ENCODE measurements at regions of chr1 and their contacts with region 1.

Region 1: DNA sequence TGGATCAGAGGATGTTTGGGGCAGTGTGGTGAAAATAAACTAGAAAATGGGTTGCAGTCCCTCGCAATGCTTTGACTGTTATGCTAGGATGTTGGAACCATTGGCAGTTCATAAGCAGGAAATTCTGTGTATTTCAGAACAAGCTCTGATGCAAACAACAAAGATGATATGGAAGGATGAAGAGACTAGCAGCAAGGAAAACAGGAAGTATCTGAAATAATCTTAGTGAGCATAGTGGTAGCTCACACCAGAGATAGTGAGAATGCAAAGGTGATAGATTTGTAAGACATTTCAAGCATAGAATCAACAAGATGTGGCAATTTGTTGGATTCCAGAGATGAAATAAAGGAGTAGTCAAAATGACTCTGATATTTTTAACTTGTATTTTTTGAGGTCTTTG is 11.1 kb upstream of the RCC1 start:
- DNase-seq: no peak
- H3K4me3 Mint-ChIP-seq: no peak overlapping the region
- H3K27ac Mint-ChIP-seq: no peak overlapping the region
- H3K4me1 Mint-ChIP-seq: peaks cover 5% of the 10 kb centered on the region
- H3K27me3 Mint-ChIP-seq: no peaks in the 10 kb centered on the region

Region 2: DNA sequence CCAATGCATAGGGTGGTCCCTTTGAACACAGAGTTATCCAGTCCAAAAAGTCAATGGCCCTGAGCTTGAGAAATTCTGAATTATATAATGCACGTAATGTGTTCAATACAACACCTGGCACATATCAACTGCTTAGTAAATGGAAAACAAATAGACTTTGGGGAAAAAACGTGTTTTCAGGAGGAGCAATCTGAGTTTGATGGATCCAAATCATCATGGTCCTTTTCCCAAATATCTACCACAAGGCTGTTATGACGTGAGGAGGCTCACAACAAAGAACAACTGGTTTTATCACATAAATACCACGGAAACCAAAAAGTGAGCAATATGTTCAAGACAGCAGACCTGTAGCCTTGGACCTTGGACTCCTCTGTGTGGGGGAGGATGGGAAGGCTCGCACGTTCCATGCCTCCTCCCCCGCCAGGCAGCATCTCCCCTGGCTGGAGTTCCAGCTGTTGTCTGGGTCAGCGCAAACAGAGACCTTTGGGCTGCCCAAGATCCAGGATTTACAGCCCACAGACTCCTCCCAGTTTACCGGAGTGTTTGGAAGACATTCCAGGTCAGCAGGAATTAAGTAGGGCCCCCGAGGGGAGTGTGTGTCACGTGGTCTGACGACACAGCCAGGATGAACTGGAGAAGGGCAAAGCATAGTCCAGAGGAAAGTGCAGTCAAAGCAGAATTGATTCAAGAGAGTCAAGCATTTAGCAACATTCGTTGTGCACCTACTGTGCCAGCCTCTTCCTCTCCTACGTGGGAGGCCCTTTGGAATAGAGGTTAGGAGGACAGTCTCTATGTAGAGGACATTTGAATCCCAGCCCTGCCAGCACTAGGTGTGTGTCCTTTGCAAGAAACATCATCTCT is 198.1 kb before region 1 on chr1:
- CTCF ChIA-PET with region 1: no interaction called
- POLR2A ChIA-PET with region 1: no interaction called
- intact Hi-C with region 1: no loop called
- DNase-seq: no peak
- H3K4me3 Mint-ChIP-seq: no peak overlapping the region
- H3K27ac Mint-ChIP-seq: no peak overlapping the region
- H3K4me1 Mint-ChIP-seq: peaks cover 3% of the 10 kb centered on the region
- H3K27me3 Mint-ChIP-seq: no peaks in the 10 kb centered on the region

Region 3: DNA sequence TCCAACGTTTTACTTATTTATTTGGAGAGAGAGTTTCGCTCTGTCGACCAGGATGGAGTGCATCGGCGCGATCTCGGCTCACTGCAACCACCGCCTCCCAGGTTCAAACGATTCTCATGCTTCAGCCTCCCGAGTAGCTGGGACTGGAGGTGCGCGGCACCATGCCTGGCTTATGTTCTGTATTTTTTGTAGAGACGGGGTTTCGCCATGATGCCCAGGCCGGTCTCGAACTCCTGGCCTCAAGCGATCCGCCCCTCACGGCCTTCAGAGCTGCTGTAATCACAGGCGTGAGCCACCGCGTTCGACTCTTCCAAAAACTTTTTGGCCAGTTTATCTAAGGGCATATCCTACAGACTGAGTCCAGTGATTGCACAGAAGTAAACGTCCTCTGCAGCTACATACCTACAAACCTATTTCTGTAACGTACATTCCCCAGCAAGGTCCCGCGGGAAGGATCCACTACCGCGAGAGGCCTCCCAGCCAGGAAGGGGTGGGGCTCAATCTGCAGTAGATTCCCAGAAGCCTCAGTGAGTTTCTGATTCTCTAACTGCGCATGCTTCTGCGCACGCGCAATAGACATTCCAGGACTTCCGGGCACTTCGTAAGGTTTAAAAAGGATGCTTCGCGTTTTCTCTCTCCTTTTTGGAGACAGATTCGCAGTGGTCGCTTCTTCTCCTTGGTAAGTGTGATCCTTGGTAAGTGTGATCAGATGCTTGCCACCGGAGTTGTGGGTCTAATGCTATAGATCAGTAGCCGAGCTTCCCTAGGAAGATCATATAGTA is 10.9 kb after region 1 on chr1 and contains the start of gene RCC1:
- CTCF ChIA-PET with region 1: no interaction called
- POLR2A ChIA-PET with region 1: interaction called, 10 read pairs
- intact Hi-C with region 1: no loop called
- DNase-seq: peak; percentile 98
- H3K4me3 Mint-ChIP-seq: peak within 1 kb of the TSS; percentile 97
- H3K27ac Mint-ChIP-seq: peak within 1 kb of the TSS; percentile 97
- H3K4me1 Mint-ChIP-seq: peaks cover 38% of the 10 kb centered on the region
- H3K27me3 Mint-ChIP-seq: peaks cover 6% of the 10 kb centered on the region
- total RNA-seq, gene RCC1: 83.5 to 86.1 TPM